Heart left ventricle (tissue), 16 donors: ENCODE measurements at regions of chr18 and their contacts with region 1.

Region 1: GRCh38 chr18:11851146-11851805 is at the start of gene CHMP1B:
- DNase-seq: peak; percentile 98 to 99 (median 99)
- ATAC-seq: peak; percentile 97 to 99 (median 99)
- H3K4me3 ChIP-seq: peak within 1 kb of the TSS; percentile 63 to 99 (median 86)
- H3K27ac ChIP-seq: peak within 1 kb of the TSS; percentile 86 to 98 (median 94)
- H3K4me1 ChIP-seq: peaks cover 5 to 44% (median 21%) of the 10 kb centered on the region in 12 donors
- H3K27me3 ChIP-seq: no peaks in the 10 kb centered on the region
- CTCF ChIP-seq: no peak
- POLR2A ChIP-seq: peak; percentile 81 to 98
- total RNA-seq, gene CHMP1B: 29.6 to 41.2 (median 37.3) TPM

Region 2: DNA sequence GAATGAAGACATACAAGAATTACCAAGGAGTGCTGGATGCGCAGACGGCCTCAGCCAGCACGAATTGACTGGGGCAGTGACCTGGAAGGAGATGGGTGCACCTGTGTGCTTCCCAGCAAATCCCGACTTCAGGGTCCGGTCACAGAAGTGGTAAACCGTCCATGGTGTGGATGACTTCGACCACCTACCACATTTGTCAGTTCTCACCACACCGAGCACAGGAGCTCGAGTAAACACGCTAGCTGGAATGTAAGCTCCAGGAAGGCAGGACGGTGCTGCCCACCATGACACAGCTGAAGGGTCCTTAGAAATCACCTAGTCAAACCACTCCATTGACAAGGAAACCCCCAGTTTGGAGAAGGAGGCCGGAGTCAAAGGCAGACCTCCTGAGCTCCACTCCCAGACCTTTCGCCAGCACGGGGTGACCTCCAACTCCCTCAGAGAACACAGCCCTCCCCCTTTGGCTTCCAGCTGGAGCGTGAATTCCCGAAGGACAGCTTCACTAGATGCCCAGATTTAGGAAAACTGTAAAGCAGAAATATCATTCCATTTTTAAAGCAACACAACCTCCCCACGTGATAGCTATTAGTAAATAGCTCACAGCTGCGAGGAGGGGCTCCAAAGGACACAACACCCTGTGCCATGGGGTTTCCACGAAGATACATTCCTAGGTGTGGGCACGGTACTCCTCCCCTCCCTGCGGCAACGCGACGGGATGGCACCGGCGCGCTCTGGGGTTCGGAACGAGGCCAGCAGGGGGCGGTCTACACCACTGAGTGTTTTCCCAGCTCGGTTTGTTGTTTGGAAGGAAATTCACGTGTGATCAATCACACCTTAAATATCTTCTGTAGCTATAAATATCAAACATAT is 196.3 kb before region 1 on chr18:
- intact Hi-C with region 1: loop called in 1 of 10 experiments (anchors 10 kb)
- DNase-seq: peak in 3 of 5 donors; percentile 20 to 50 (median 42)
- ATAC-seq: peak in 3 of 4 donors; percentile 70 to 77 (median 72)
- H3K4me3 ChIP-seq: peak overlapping the region in 1 of 12 donors; percentile 5
- H3K27ac ChIP-seq: no peak overlapping the region
- H3K4me1 ChIP-seq: peaks cover 0 to 5% (median 0%) of the 10 kb centered on the region in 12 donors
- H3K27me3 ChIP-seq: peaks cover 0 to 31% (median 0%) of the 10 kb centered on the region in 9 donors
- CTCF ChIP-seq: peak; percentile 55 to 81 (median 70)
- POLR2A ChIP-seq: no peak

Region 3: DNA sequence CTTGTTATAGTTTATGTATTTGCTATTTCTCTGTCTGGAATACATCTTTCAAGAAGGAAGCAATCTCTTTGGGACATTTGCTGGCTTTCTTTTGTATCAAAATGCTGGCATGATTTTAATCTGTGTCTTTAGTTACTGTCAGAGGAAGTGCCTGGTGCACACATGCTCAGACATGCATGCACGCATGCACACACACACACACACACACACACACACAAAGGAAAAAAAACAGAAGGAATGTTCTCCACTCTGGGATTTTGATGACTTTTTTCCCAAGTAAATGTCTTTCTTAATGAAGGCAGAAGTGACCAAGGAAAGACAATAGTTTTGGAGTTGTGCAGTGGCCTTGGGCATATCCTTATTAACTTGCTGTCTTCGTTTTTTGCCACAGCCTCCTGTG is 155.5 kb before region 1 on chr18:
- intact Hi-C with region 1: no loop called
- DNase-seq: no peak
- ATAC-seq: no peak
- H3K4me3 ChIP-seq: no peak overlapping the region
- H3K27ac ChIP-seq: no peak overlapping the region
- H3K4me1 ChIP-seq: peaks cover 0 to 3% (median 0%) of the 10 kb centered on the region in 12 donors
- H3K27me3 ChIP-seq: peaks cover 0 to 11% (median 2%) of the 10 kb centered on the region in 9 donors
- CTCF ChIP-seq: no peak
- POLR2A ChIP-seq: no peak

Region 4: DNA sequence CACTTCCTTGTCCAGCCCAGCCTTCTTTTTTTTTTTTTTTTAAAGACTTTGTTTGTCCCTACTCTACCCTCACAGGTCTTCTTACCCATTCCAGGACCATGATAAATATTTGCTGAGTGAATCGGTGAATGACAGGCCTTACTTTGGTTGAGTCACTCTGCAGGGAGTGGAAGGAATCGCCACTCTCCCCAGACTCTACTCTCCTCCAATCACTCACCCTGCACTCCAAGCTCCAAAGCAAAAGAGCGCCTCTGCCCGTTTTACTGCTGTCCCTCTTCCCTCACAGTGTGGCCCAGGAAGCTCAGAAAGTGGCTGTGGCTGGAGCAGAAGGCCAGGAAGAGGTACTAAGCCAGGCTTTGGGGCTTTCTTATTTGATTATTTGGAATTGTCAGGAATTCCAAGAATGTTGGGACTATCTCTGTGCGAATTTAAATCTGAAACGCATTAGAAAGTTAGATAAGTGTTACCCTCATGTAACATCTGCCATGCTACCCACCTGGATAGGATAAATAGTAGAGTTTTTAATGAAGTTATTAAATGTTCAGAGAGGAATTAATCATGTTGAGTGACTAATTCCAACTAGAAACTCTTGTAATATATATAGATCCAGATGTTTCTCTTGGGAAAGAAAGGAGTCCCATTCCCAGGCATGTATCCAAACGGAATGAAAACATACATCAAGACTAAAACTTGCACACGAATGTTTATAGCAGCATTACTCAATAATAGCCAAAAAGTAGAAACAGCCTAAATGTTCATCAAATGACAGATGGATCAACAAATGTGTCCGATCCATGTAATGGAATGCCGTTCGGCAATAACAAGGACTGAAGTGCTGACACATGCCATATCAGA is 43.0 kb before region 1 on chr18:
- intact Hi-C with region 1: no loop called
- DNase-seq: no peak
- ATAC-seq: no peak
- H3K4me3 ChIP-seq: no peak overlapping the region
- H3K27ac ChIP-seq: no peak overlapping the region
- H3K4me1 ChIP-seq: peaks cover 0 to 9% (median 0%) of the 10 kb centered on the region in 12 donors
- H3K27me3 ChIP-seq: no peaks in the 10 kb centered on the region
- CTCF ChIP-seq: no peak
- POLR2A ChIP-seq: no peak

Region 5: DNA sequence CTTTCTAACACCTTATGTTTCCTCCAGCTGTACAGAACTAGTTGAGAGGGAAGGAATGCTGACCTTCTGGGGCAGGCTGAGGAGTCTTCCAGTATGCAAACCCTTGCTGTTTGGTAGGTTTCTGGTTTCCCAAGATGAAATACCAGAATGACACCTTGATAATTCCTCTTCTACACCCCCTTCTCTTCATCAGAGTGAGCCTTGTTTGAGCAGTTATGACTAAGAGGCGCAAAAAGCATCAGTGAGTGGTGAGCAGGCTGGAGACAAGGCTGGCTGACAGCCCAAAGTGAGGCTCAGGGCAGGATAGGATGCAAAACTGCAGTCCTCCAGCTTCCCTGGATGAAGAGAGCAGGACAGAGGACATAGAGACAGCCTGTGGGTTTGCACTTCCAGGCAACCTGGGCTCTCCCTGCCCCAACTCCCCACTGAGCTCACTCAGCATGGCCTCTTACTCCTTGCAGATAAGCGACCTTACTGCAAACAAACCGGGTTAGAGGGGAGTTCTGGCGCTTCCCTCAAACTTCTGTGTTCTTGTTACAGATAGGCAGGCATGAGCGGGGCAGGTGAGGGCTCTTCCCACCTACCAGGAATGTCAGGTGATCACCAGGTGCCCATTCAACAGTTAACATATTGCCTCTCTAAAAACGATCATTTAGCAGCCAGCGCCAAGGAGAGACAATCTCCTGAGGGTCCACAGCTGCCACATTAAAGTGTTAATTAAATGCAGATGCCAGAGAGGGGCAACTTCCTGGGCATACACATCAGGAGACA is 51.4 kb after region 1 on chr18:
- intact Hi-C with region 1: loop called in 6 of 10 experiments (anchors 5 to 10 kb)
- DNase-seq: no peak
- ATAC-seq: peak in 3 of 4 donors; percentile 27 to 50 (median 35)
- H3K4me3 ChIP-seq: no peak overlapping the region
- H3K27ac ChIP-seq: no peak overlapping the region
- H3K4me1 ChIP-seq: peaks cover 0 to 23% (median 8%) of the 10 kb centered on the region in 12 donors
- H3K27me3 ChIP-seq: no peaks in the 10 kb centered on the region
- CTCF ChIP-seq: no peak
- POLR2A ChIP-seq: no peak

Region 6: DNA sequence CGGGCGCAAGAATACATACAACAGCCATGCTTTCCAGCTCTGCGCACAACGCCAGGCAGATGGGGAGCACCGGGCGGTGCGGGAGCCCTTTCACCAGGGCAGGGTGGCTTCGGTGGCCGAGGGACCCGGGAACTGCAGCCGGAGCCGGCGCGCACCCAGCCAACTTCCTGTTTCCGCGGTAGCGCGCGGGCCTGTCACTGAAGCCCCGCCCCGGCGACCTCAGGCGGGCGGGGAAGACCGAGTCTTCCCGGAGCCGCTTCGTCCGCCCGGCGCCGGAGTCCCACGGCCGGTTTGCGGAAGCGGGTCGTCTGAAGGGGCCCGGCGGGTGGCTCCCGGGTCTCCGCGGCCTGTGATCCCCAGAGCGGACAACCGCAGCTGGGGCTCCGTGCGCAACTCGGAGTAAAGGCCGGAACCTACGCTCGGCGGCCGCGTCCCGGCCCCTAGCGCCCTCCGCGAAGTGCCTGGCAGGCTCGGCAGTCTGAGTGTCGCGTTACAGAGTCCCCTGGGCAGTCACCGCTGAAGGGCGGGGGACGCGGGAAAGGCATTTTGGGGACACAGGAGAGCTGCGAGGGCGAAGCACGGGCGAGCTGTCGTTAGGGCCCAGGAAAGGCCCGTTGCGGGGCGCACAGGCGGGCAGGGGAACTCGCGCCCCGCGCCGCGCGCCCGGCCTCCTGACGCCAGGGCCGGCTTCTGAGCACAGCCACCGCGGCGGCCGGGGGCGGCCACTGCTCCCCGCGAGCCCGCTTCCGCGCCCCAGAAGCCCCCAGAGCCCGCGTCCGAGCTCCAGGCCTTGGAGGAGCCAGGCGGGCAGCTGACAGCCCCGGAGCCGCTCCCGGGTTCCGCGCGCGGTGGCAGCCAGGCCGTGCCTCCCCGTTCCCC is 57.1 kb after region 1 on chr18 and contains the start of gene MPPE1:
- intact Hi-C with region 1: loop called (anchors 1 to 10 kb)
- DNase-seq: peak; percentile 92 to 96 (median 93)
- ATAC-seq: peak; percentile 79 to 97 (median 95)
- H3K4me3 ChIP-seq: peak within 1 kb of the TSS; percentile 62 to 95 (median 78)
- H3K27ac ChIP-seq: peak within 1 kb of the TSS; percentile 95 to 100 (median 98)
- H3K4me1 ChIP-seq: peaks cover 0 to 34% (median 17%) of the 10 kb centered on the region in 12 donors
- H3K27me3 ChIP-seq: no peaks in the 10 kb centered on the region
- CTCF ChIP-seq: peak in 3 of 12 donors; percentile 5 to 7 (median 5)
- POLR2A ChIP-seq: peak; percentile 65 to 83
- total RNA-seq, gene MPPE1: 17.8 to 45.5 (median 29.7) TPM

Region 7: GRCh38 chr18:11947214-11948191 is 96.2 kb after region 1 on chr18:
- intact Hi-C with region 1: loop called in 1 of 10 experiments (anchors 1 kb)
- DNase-seq: peak; percentile 93 to 97 (median 95)
- ATAC-seq: peak; percentile 98 to 99 (median 98)
- H3K4me3 ChIP-seq: peak overlapping the region; percentile 4 to 86 (median 65)
- H3K27ac ChIP-seq: peak overlapping the region; percentile 88 to 100 (median 96)
- H3K4me1 ChIP-seq: peaks cover 0 to 22% (median 13%) of the 10 kb centered on the region in 12 donors
- H3K27me3 ChIP-seq: no peaks in the 10 kb centered on the region
- CTCF ChIP-seq: peak in 2 of 12 donors; percentile 5 to 15
- POLR2A ChIP-seq: peak in 1 of 2 donors; percentile 86